ENCODE measurements at regions of chr1 and their contacts with region 1.

Region 1: GRCh38 chr1:174022080-174022975 is at the start of gene RC3H1:
- DNase-seq: peak; percentile 80 to 94 (median 88)
- ATAC-seq: peak; percentile 91
- H3K4me3 ChIP-seq: peak within 1 kb of the TSS; percentile 97
- H3K4me3 Mint-ChIP-seq: peak within 1 kb of the TSS; percentile 99
- H3K27ac ChIP-seq: peak within 1 kb of the TSS; percentile 85 to 90
- H3K27ac Mint-ChIP-seq: peak within 1 kb of the TSS; percentile 91
- H3K4me1 ChIP-seq: peaks cover 27% of the 10 kb centered on the region
- H3K4me1 Mint-ChIP-seq: peaks cover 55% of the 10 kb centered on the region
- H3K27me3 ChIP-seq: no peaks in the 10 kb centered on the region
- H3K27me3 Mint-ChIP-seq: no peaks in the 10 kb centered on the region
- CTCF ChIP-seq: no peak
- total RNA-seq, gene RC3H1: 38.0 to 40.4 TPM

Region 2: GRCh38 chr1:173476664-173477285 is 545.6 kb before region 1 on chr1:
- CTCF ChIA-PET with region 1: no interaction called
- POLR2A ChIA-PET with region 1: interaction called, 8 read pairs
- intact Hi-C with region 1: loop called in 1 of 2 experiments (anchors 2 kb)
- DNase-seq: peak; percentile 53 to 91 (median 75)
- ATAC-seq: peak; percentile 79
- H3K4me3 ChIP-seq: peak overlapping the region; percentile 84
- H3K4me3 Mint-ChIP-seq: peak overlapping the region; percentile 93
- H3K27ac ChIP-seq: peak overlapping the region; percentile 48 to 89
- H3K27ac Mint-ChIP-seq: peak overlapping the region; percentile 82
- H3K4me1 ChIP-seq: peaks cover 32% of the 10 kb centered on the region
- H3K4me1 Mint-ChIP-seq: peaks cover 72% of the 10 kb centered on the region
- H3K27me3 ChIP-seq: no peaks in the 10 kb centered on the region
- H3K27me3 Mint-ChIP-seq: no peaks in the 10 kb centered on the region
- CTCF ChIP-seq: no peak

Region 3: DNA sequence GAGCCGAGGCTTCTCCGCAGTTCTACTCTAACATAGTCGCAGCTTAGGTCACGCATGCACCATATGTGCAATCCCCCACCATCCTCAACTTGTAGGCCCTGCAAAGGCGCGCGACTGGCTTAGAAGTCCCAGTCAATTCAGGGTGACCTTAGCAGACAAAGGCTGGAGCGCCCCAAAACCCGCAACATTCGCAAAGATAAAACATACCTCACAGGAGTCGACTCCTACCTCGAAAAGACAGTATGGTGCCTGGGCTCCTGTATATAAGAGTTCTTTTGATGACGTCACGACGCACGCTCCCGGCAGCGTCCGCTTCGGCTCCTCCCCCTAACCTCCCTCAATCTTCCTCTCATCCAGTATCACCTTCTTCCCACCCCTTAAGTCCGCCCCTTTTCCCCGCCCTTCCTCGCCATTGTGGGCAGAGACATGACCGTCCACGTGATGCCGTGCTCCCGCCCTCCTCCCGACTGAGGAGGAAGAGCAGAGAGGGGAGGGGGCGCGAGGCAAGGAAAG is 154.5 kb before region 1 on chr1 and contains the start of gene GAS5:
- CTCF ChIA-PET with region 1: no interaction called
- POLR2A ChIA-PET with region 1: interaction called, 27 read pairs
- intact Hi-C with region 1: loop called (anchors 2 kb)
- DNase-seq: peak; percentile 98 to 100 (median 99)
- ATAC-seq: peak; percentile 79
- H3K4me3 ChIP-seq: peak within 1 kb of the TSS; percentile 90
- H3K4me3 Mint-ChIP-seq: peak within 1 kb of the TSS; percentile 93
- H3K27ac ChIP-seq: peak within 1 kb of the TSS; percentile 96
- H3K27ac Mint-ChIP-seq: peak within 1 kb of the TSS; percentile 95
- H3K4me1 ChIP-seq: peaks cover 59% of the 10 kb centered on the region
- H3K4me1 Mint-ChIP-seq: peaks cover 85% of the 10 kb centered on the region
- H3K27me3 ChIP-seq: no peaks in the 10 kb centered on the region
- H3K27me3 Mint-ChIP-seq: no peaks in the 10 kb centered on the region
- CTCF ChIP-seq: no peak
- total RNA-seq, gene GAS5: 865 to 867 TPM

Region 4: DNA sequence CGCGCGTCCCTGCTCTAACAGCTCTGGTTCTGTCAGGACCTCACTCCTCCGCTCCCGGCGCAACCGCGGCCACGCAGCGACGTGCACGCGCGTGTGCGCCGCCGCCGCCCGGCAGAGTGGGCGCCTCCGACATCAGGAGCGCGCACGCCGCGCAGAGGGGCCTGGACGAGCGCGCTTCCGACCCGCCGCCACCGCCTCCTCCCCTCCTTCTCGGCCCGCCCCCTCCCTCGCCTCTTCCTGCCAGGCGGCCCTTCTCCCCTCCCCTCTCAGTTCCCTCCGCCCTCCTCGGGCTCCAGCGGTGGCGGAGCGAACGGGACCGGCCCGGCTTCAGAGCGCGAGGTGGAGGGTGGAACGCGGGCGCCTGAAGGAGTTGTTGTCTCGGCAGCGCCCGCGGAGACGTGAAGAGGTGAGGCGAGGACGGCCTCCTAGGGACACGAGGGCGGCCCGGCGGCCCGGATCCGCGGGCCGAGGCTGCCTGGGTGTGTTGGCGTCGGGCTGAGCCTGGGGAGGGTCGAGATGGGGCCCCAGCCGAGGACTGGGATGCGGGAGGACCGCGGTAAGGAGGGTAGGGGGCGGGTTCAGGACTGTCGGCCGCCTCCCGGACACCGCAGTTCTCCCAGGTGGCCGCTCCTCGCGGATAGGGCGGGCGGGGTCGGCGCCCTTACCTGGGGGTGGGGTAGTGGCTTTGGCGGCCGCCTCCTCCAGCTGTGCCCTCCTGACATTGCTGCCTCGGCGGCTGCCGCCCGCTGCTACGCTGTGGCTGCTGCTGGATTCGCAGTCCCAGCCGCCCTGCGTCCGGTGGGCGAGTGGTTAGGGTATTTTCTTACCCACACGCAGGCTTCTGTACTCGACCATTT is 137.2 kb after region 1 on chr1 and contains the start of gene RABGAP1L:
- CTCF ChIA-PET with region 1: no interaction called
- POLR2A ChIA-PET with region 1: interaction called, 8 read pairs
- intact Hi-C with region 1: loop called (anchors 1 to 2 kb)
- DNase-seq: peak; percentile 88 to 99 (median 94)
- ATAC-seq: peak; percentile 90
- H3K4me3 ChIP-seq: peak within 1 kb of the TSS; percentile 73
- H3K4me3 Mint-ChIP-seq: peak within 1 kb of the TSS; percentile 96
- H3K27ac ChIP-seq: peak within 1 kb of the TSS; percentile 85 to 95
- H3K27ac Mint-ChIP-seq: peak within 1 kb of the TSS; percentile 92
- H3K4me1 ChIP-seq: peaks cover 20% of the 10 kb centered on the region
- H3K4me1 Mint-ChIP-seq: peaks cover 58% of the 10 kb centered on the region
- H3K27me3 ChIP-seq: no peaks in the 10 kb centered on the region
- H3K27me3 Mint-ChIP-seq: no peaks in the 10 kb centered on the region
- CTCF ChIP-seq: no peak
- total RNA-seq, gene RABGAP1L: 59.8 to 67.6 TPM

Region 5: DNA sequence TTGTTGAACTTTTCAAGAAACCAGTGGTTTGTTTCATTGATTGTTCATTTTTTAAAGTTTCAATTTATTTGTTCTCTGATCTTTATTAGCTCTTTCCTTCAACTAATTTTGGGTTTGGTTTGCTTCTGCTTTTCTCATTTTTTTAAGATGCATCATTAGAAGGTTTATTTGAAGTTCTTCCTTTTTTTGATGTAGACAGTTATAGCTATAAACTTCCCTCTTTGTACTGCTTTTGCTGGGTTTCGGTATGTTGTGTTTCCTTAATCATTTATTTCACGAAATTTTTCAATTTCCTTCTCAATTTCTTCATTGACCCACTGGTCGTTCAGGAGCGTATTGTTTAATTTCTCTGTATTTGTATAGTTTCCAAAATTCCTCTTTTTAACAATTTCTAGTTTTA is 292.1 kb after region 1 on chr1:
- CTCF ChIA-PET with region 1: no interaction called
- POLR2A ChIA-PET with region 1: no interaction called
- intact Hi-C with region 1: no loop called
- DNase-seq: no peak
- ATAC-seq: no peak
- H3K4me3 ChIP-seq: no peak overlapping the region
- H3K4me3 Mint-ChIP-seq: no peak overlapping the region
- H3K27ac ChIP-seq: no peak overlapping the region
- H3K27ac Mint-ChIP-seq: no peak overlapping the region
- H3K4me1 ChIP-seq: no peaks in the 10 kb centered on the region
- H3K4me1 Mint-ChIP-seq: peaks cover 11% of the 10 kb centered on the region
- H3K27me3 ChIP-seq: no peaks in the 10 kb centered on the region
- H3K27me3 Mint-ChIP-seq: no peaks in the 10 kb centered on the region
- CTCF ChIP-seq: no peak

Region 6: GRCh38 chr1:174324939-174325338 is 302.6 kb after region 1 on chr1:
- CTCF ChIA-PET with region 1: no interaction called
- POLR2A ChIA-PET with region 1: no interaction called
- intact Hi-C with region 1: no loop called
- DNase-seq: no peak
- ATAC-seq: no peak
- H3K4me3 ChIP-seq: no peak overlapping the region
- H3K4me3 Mint-ChIP-seq: no peak overlapping the region
- H3K27ac ChIP-seq: no peak overlapping the region
- H3K27ac Mint-ChIP-seq: no peak overlapping the region
- H3K4me1 ChIP-seq: no peaks in the 10 kb centered on the region
- H3K4me1 Mint-ChIP-seq: no peaks in the 10 kb centered on the region
- H3K27me3 ChIP-seq: no peaks in the 10 kb centered on the region
- H3K27me3 Mint-ChIP-seq: no peaks in the 10 kb centered on the region
- CTCF ChIP-seq: no peak

Region 7: DNA sequence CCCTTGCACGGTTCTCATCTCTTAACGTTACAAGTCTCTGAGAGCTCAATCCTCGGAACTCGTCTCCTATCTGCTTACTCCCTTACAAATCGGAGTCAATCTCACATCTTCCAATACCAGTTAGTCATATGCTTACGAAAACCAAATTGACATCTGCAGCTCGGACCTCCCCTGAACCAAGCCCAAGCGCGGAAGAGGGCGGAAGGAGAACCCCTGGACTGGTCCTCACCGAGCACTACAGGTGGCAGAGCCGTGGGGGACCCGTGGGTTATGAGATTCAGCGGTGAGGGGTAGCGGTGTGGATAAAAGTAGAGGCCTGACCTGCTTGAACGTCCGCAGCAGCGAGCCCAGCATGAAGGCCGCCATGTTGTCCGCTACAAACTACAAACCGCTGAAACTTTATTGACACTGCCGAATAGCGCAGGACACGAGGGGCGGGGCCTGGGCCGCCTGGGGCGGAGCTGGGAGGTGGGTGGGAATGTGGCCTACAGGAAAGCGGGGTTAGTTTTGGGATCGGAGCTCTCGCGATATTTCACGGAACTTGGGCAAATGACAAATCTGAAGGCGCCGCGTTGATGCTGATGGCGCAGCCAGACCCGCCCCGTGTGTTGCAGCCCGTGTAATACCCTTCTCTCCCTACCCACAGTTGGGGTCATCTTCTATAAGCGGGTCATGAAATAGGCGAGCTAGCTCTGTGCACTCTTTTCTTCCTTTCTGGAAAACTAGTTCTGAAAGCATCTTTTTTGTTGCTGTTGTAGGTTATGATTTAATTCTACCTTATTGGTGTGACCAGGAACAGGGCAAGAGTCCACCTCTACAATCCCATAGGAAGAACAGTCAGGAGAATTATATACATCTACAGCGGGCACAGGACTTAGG is 1001.0 kb after region 1 on chr1 and contains the start of gene MRPS14:
- CTCF ChIA-PET with region 1: no interaction called
- POLR2A ChIA-PET with region 1: interaction called, 9 read pairs
- intact Hi-C with region 1: loop called in 1 of 2 experiments (anchors 10 kb)
- DNase-seq: peak; percentile 96 to 99 (median 98)
- ATAC-seq: peak; percentile 90
- H3K4me3 ChIP-seq: peak within 1 kb of the TSS; percentile 97
- H3K4me3 Mint-ChIP-seq: peak within 1 kb of the TSS; percentile 88
- H3K27ac ChIP-seq: peak within 1 kb of the TSS; percentile 84 to 91
- H3K27ac Mint-ChIP-seq: peak within 1 kb of the TSS; percentile 94
- H3K4me1 ChIP-seq: peaks cover 19% of the 10 kb centered on the region
- H3K4me1 Mint-ChIP-seq: peaks cover 34% of the 10 kb centered on the region
- H3K27me3 ChIP-seq: no peaks in the 10 kb centered on the region
- H3K27me3 Mint-ChIP-seq: no peaks in the 10 kb centered on the region
- CTCF ChIP-seq: no peak
- total RNA-seq, gene MRPS14: 8.5 to 9.6 TPM